ENCODE measurements at regions of chr12 and their contacts with region 1.

Region 1: GRCh38 chr12:107093417-107094182 is at the start of gene CRY1:
- DNase-seq: peak; percentile 86
- H3K4me3 ChIP-seq: peak within 1 kb of the TSS; percentile 93
- H3K27ac ChIP-seq: peak within 1 kb of the TSS; percentile 99
- H3K27me3 ChIP-seq: no peaks in the 10 kb centered on the region
- CTCF ChIP-seq: no peak
- polyA plus RNA-seq, gene CRY1: 10.3 and 13.7 TPM in 2 replicates

Region 2: DNA sequence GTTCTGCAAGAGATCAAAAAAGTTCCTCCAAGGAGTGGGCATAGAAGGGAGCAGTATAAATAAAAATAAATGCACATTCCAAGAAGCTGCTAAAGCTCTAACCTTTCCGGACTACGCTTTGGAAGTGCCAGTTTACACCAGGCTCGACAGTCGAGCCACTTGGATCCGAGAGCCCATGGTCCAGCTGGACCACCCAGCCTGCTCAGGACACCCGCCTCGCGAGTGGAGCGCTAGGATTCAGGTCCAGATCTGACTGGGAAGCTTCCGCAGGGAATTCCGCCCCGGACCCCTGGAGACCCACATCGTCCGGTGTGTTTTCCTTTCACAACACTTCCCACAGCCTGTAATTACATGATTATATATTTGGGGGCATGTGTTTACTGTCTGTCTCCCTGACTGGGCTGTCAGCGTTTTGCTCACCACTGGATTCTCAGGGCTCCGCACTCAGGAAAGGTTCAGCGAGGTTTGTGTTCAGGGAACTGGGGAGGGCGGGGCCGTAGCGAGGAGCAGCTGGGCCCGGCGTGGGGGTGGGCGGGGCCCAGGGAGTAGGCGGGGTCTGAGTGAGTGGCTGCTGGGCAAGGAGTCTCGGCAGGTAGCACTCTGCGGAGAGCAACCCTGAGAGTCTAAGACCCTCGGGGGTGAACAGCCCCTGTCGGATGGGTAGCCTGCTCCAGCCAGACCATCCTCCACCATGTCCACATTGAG is 190.2 kb before region 1 on chr12:
- CTCF ChIA-PET with region 1: no interaction called
- POLR2A ChIA-PET with region 1: no interaction called
- DNase-seq: no peak
- H3K4me3 ChIP-seq: peak overlapping the region; percentile 58
- H3K27ac ChIP-seq: no peak overlapping the region
- H3K27me3 ChIP-seq: peaks cover 11% of the 10 kb centered on the region
- CTCF ChIP-seq: no peak

Region 3: DNA sequence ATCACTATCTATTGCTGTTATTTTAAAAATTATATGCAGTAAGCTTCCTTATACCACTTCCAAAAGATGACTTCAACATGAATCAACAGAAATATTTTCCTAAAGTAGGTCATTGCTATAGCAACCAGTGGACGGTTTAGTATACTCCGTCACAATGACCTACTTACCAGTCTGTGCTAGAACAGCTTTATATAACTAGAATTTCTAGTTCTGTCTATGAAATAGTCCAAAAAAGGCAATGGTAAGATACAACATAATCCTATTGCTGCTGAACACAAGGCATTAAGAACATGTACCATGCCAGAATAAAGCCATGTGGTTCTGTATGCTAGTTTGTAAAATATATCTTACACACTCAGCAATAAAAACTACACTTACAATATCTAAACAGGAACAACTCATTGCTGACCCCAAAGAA is 66.0 kb before region 1 on chr12:
- CTCF ChIA-PET with region 1: interaction called, 3 read pairs
- POLR2A ChIA-PET with region 1: interaction called, 10 read pairs
- DNase-seq: peak; percentile 70
- H3K4me3 ChIP-seq: no peak overlapping the region
- H3K27ac ChIP-seq: no peak overlapping the region
- H3K27me3 ChIP-seq: no peaks in the 10 kb centered on the region
- CTCF ChIP-seq: no peak

Region 4: GRCh38 chr12:107057071-107057818 is 36.4 kb before region 1 on chr12:
- CTCF ChIA-PET with region 1: interaction called, 10 read pairs
- POLR2A ChIA-PET with region 1: no interaction called
- DNase-seq: no peak
- H3K4me3 ChIP-seq: no peak overlapping the region
- H3K27ac ChIP-seq: no peak overlapping the region
- H3K27me3 ChIP-seq: no peaks in the 10 kb centered on the region
- CTCF ChIP-seq: no peak

Region 5: DNA sequence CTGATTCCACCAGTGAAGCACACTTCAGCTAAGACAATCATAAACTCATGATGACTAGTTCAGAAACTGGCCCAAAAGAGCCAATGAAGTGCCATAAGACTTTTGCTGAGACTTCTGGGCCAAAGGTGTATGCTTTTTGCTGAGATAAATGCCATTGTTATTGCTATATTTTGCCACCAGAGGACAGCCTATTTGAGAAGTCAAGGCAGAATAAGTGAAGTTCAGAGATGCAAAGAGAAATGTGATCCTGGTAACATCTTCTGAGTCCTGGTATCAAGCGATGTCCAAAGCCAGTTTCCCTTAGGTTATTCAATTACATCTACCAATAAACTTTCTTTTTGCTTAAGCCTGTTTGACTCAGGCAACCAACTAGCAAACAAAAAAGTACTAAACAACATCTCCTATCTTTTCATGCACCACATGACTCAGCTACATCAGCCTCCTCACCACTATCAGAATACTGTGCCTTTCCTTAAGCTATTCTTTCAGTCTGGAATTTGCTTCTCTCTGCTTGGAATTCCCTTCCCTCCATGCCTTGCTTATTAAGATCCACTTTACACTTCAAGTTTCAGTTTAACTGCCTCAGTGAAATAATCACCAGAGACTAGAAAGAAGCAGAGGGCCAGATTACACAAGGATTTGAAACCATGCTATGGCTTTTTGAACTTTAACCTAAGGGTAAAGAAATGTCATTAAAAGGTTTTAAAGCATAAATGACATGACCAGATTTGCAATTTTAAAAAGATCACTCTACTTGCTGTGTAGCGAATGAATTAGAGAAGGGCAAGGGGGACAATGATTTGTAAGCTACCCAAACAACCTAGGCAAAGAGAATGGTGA is 14.2 kb before region 1 on chr12:
- CTCF ChIA-PET with region 1: interaction called, 59 read pairs
- POLR2A ChIA-PET with region 1: interaction called, 4 read pairs
- DNase-seq: no peak
- H3K4me3 ChIP-seq: no peak overlapping the region
- H3K27ac ChIP-seq: no peak overlapping the region
- H3K27me3 ChIP-seq: no peaks in the 10 kb centered on the region
- CTCF ChIP-seq: peak; percentile 63

Region 6: DNA sequence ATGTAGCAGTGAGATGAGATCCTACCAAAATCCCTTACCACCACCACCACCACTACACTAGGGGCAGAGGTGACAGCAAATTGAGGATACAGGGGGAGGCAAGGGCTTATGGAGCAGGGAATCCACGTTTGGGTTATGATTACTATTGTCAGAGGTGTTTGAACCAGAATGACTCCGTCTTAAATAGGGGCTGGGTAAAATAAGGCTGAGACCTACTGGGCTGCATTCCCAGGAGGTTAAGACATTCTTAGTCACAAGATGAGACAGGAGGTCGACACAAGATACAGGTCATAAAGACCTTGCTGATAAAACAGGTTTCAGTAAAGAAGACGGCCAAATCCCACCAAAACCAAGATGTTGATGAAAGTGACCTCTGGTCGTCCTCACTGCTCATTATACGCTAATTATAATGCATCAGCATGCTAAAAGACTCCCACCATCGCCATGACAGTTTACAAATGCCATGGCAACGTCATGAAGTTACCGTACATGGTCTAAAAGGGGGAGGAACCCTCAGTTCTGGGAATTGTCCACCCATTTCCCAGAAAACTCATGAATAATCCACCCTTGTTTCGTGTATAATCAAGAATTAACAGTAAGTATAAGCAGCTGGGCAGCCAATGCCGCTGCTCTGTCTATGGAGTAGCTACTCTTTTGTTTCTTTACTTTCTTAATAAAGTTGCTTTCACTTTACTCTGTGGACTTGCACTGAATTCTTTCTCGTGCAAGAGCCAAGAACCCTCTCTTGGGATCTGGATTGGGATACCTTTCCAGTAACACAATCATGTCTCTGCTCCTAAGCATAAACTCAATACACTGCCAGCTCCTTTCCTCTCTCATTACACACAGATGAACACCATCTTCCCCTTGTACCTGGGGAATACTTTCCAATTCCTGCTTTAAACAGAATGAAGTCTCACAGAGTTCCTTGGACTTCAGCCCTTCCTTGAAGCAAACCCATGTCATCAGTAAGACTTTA is 16.4 kb after region 1 on chr12:
- CTCF ChIA-PET with region 1: interaction called, 32 read pairs
- POLR2A ChIA-PET with region 1: no interaction called
- DNase-seq: no peak
- H3K4me3 ChIP-seq: no peak overlapping the region
- H3K27ac ChIP-seq: no peak overlapping the region
- H3K27me3 ChIP-seq: peaks cover 13% of the 10 kb centered on the region
- CTCF ChIP-seq: no peak

Region 7: DNA sequence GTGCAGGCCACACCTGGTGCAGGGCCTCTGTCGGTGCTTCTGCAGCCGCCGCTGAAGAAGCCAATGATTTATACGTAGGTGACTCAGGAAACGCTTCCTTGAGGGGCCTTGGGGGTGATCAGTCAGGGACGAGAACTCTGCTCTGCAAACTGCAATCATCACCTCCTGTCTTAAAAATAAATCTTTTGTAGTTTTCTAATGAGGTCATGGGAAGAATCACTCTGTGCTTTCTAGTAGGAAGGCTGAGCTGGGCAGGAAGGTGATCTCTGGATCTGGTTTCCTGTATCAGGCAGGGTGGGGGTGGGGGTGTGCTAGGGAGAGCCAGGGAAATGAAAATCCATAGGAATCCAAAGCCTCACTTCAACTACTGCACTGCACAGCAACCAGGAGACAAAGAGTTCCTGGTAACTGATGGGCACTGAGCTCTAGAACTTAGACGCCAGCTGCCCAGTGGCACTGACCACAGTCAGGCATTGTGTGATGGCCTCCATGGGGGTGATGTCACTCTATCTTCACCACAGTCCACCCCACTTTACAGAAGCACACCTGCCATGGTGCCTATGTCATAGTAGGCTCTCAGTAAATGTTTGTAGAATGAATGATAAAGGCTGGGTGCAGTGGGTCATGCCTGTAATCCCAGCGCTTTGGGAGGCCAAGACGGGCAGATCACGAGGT is 299.6 kb after region 1 on chr12:
- CTCF ChIA-PET with region 1: no interaction called
- POLR2A ChIA-PET with region 1: no interaction called
- DNase-seq: no peak
- H3K4me3 ChIP-seq: no peak overlapping the region
- H3K27ac ChIP-seq: no peak overlapping the region
- H3K27me3 ChIP-seq: no peaks in the 10 kb centered on the region
- CTCF ChIP-seq: no peak